ENCODE measurements at regions of chr19 and their contacts with region 1.

Region 1: GRCh38 chr19:8261347-8262310 is 46.5 kb downstream of the CD320 start:
- DNase-seq: peak in 1 of 5 donors; percentile 39
- H3K4me3 ChIP-seq: no peak overlapping the region
- H3K27ac ChIP-seq: no peak overlapping the region
- H3K4me1 ChIP-seq: no peaks in the 10 kb centered on the region
- H3K27me3 ChIP-seq: no peaks in the 10 kb centered on the region
- CTCF ChIP-seq: no peak
- EP300 ChIP-seq: no peak
- POLR2A ChIP-seq: no peak

Region 2: GRCh38 chr19:8311461-8312376 is 50.1 kb after region 1 on chr19:
- intact Hi-C with region 1: loop called in 1 of 4 experiments (anchors 10 kb)
- DNase-seq: peak in 4 of 5 donors; percentile 27 to 51 (median 34)
- H3K4me3 ChIP-seq: no peak overlapping the region
- H3K27ac ChIP-seq: no peak overlapping the region
- H3K4me1 ChIP-seq: peaks cover 7% of the 10 kb centered on the region
- H3K27me3 ChIP-seq: no peaks in the 10 kb centered on the region
- CTCF ChIP-seq: no peak
- EP300 ChIP-seq: no peak
- POLR2A ChIP-seq: no peak